Calu3 (cell line): ENCODE measurements at regions of chr11 and their contacts with region 1.

Region 1: DNA sequence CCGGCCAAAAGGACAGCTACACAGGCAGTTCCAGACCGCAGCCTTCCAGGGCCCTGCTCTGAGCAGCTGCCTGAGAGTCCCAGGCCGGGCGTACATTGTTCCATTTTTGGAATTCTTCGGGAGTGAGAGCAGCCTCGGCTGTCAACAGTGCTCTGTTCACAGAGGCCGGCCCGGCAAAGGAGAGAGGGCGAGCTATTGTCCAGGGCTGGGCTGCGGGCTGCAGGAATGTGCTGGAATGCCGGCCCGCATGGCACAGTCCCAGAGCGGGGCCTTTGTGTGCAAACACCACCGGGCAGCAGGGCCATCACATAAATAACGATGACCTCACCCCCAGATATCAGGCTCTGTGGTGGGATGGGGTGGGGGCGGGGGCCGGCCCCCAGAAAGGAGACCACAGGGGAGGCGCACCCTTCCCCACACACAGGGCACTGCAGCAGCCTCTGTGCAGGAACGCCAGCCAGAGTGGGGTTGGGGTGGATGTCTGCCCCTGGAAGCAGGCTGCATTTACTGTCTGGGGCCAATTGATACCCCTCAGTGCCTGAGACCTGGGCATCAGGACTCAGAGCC is 15.8 kb downstream of the LINC01488 start:
- DNase-seq: peak; percentile 89
- H3K4me3 Mint-ChIP-seq: no peak overlapping the region
- H3K27ac Mint-ChIP-seq: no peak overlapping the region
- H3K4me1 Mint-ChIP-seq: peaks cover 18% of the 10 kb centered on the region
- H3K27me3 Mint-ChIP-seq: peaks cover 23% of the 10 kb centered on the region
- CTCF ChIP-seq: no peak

Region 2: DNA sequence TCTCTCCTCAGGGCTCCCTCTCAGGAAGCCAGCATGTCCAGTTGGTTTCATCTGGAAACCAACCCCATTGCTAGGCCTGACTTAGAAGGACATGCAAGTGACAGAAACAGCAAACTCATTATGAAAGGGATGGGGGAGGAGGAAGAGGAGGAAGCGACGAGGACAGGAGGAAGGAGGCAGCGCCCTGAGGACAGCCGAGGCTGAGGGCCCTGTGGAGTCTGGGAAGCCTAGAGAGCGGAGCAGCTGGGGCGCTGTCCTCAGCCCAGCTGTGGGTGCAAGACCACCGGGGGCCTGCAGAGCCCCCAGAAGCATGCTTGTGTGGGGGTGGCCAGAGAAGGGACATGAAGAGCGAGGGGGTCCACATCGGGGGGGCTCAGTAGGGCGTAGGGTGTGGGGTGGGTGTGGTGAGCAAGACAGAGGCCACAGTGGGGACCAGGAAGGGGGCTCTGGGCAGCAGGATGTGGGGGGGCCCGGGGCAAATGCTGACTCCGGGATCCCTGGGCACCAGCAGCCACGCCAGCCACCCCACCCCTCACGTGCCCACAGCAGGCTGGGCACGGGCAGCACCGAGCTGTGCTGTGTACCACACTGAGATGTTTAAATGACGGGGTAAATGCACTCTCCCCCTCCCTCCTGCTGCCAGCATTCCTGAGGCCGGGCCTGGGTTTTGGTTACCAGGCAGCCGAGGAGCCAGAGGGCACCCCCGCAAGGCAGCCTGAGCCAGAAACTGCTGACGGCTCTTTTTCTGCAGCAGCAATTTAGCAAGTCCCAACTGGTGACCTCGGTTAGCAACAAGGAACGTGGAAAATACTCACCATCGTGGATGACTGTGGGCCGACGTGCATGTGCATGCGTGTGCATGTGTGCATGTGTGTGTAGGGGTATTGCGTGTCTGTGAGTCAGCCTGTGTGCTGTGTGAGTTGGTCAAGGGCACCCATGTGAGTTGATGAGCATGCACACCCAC is 98.5 kb before region 1 on chr11:
- CTCF ChIA-PET with region 1: interaction called, 10 read pairs
- intact Hi-C with region 1: no loop called
- DNase-seq: no peak
- H3K4me3 Mint-ChIP-seq: no peak overlapping the region
- H3K27ac Mint-ChIP-seq: no peak overlapping the region
- H3K4me1 Mint-ChIP-seq: peaks cover 19% of the 10 kb centered on the region
- H3K27me3 Mint-ChIP-seq: peaks cover 10% of the 10 kb centered on the region
- CTCF ChIP-seq: no peak